ENCODE measurements at regions of chr12 and their contacts with region 1.

Region 1: GRCh38 chr12:25458047-25458552 is 95.0 kb downstream of the LMNTD1 start:
- DNase-seq: peak; percentile 63 to 89
- H3K4me3 ChIP-seq: peak overlapping the region; percentile 24; the same call in 1 of the 2 replicates
- H3K27ac ChIP-seq: peak overlapping the region; percentile 67
- H3K4me1 ChIP-seq: peaks cover 22% of the 10 kb centered on the region
- H3K27me3 ChIP-seq: no peaks in the 10 kb centered on the region
- CTCF ChIP-seq: no peak

Region 2: GRCh38 chr12:25254271-25254880 is 203.7 kb before region 1 on chr12:
- CTCF ChIA-PET with region 1: no interaction called
- POLR2A ChIA-PET with region 1: no interaction called
- intact Hi-C with region 1: no loop called
- DNase-seq: no peak
- H3K4me3 ChIP-seq: no peak overlapping the region
- H3K27ac ChIP-seq: no peak overlapping the region
- H3K4me1 ChIP-seq: peaks cover 13% of the 10 kb centered on the region
- H3K27me3 ChIP-seq: no peaks in the 10 kb centered on the region
- CTCF ChIP-seq: no peak

Region 3: GRCh38 chr12:25529738-25530137 is 71.6 kb after region 1 on chr12:
- CTCF ChIA-PET with region 1: no interaction called
- POLR2A ChIA-PET with region 1: interaction called, 13 read pairs
- intact Hi-C with region 1: no loop called
- DNase-seq: no peak
- H3K4me3 ChIP-seq: no peak overlapping the region
- H3K27ac ChIP-seq: no peak overlapping the region
- H3K4me1 ChIP-seq: peaks cover under 1% of the 10 kb centered on the region
- H3K27me3 ChIP-seq: no peaks in the 10 kb centered on the region
- CTCF ChIP-seq: no peak